ENCODE measurements at regions of chr2 and their contacts with region 1.

Region 1: GRCh38 chr2:55282110-55282917 is 13.3 kb upstream of the MTIF2 start:
- DNase-seq: peak; percentile 43 to 92
- H3K4me3 ChIP-seq: peak overlapping the region; percentile 81 to 87
- H3K27ac ChIP-seq: peak overlapping the region; percentile 92
- H3K4me1 ChIP-seq: peaks cover 0 to 9% of the 10 kb centered on the region in 2 donors
- H3K27me3 ChIP-seq: no peaks in the 10 kb centered on the region
- CTCF ChIP-seq: no peak

Region 2: DNA sequence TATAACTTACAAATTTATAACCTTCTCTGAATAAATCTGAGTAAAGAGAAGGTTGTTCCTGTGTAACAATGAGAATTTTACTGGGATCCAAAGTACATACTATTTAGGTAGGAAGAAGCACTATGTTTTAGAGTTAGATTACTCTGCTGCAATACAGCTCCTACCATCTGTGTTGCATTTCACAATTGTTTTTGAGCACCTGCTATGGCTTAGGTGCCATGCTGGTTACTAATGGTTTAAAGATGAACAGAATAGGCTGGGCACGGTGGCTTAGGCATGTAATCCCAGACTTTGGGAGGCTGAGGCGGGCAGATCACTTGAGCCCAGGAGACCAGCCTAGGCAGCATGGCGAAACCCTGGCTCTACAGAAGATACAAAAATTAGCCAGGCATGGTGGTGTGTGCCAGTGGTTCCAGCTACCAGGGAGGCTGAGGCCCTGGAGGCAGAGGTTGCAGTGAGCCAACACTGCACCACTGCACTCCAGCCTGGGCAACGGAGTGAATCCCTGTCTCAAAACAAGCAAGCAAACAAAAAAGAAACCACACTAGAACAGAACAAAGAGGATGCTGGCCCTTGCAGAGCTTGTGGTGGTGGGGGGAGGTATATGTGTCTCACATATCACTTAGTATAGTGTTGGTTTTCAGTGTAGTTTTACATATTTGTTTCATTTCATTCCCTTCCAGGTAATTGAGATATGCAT is 769.5 kb before region 1 on chr2:
- intact Hi-C with region 1: no loop called
- DNase-seq: no peak
- H3K4me3 ChIP-seq: no peak overlapping the region
- H3K27ac ChIP-seq: no peak overlapping the region
- H3K4me1 ChIP-seq: peaks cover 0 to 18% of the 10 kb centered on the region in 2 donors
- H3K27me3 ChIP-seq: no peaks in the 10 kb centered on the region
- CTCF ChIP-seq: no peak

Region 3: DNA sequence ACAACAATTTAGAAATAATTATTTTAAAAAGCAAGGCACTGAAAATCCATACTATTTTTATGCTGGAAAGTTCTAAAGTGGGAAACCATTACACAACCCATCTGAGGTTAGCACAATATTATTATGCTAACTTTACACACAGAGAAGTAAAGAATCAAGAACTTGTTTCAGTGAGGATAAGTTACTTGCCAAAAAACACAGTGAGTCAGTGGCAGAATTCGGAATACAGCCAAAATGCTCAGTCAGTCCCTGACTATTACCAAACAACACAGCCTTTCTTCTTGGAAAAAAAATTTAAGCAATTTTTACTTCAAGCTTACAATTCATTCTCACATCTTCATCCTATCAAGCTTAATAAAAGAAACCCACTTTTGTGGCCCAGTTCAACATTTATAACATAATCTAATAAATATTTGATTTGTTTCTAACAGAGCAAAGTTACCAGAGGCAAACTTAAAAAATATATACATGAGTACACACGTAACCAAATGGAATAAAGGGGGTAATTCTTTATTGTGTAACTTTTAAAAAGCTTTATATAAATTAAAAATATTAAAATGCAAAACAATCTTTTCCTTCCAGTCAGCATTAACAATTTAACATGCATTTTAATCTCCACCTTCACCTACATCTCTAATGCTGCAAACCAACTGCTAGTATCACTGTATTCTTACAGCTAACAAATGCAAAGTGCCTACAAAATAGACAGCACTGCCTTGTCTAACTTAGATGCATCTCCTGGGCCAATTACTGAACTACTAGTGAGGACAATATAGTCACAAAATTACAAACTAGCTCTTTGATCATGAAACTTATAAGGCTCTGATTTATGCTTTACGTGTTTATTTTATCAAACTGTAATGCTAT is 82.1 kb after region 1 on chr2:
- intact Hi-C with region 1: loop called (anchors 5 kb)
- DNase-seq: peak in 1 of 2 donors; percentile 85
- H3K4me3 ChIP-seq: no peak overlapping the region
- H3K27ac ChIP-seq: peak overlapping the region; percentile 10 to 54
- H3K4me1 ChIP-seq: peaks cover 0 to 17% of the 10 kb centered on the region in 2 donors
- H3K27me3 ChIP-seq: no peaks in the 10 kb centered on the region
- CTCF ChIP-seq: no peak

Region 4: DNA sequence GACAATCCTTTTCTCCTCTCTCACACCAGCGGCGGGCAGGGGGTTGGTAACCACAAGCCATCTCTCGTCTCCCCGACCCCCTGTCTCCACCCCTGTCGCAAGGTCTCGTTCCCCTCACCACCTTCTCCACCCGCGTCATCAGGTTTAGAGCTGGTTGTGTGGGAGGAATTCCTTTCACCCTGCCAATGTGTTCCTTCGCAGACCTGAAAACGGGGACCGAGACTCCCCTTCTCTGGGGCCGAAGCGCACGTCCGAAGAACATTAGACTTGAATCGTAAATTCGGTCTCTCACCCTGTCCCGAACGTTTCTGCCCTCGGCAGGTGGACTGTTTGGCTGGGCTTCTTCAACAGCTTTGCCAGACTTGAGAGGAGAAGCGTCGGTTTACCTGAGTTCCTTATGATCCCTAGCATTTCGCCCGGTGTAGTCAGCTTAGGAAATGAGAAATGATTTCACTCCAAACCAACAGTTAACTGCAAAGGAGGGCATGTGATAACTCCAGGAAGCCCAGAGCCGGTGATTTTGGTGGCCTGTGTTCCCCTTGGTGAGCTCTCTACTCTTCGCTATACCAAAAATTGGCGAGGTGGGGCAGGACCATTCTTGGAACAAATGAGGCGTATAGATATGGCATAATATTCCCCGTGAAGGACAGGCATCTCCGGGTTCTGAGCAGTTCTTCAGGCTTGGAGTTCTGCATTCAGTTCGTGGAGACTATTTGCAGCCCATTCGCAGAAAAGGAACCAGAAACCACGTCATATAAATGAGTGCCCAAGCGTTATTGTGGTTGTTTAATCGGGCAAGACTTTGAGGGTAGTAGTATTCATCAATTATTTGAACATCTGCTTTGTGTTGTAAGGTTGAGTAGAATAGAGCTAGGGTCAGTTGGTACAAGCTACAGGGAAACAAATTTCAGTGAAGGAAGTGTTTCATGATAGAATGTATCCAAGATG is 237.9 kb after region 1 on chr2:
- intact Hi-C with region 1: loop called (anchors 5 kb)
- DNase-seq: peak in 1 of 2 donors; percentile 68
- H3K4me3 ChIP-seq: peak overlapping the region; percentile 60 to 93
- H3K27ac ChIP-seq: peak overlapping the region; percentile 83 to 84
- H3K4me1 ChIP-seq: peaks cover 3% of the 10 kb centered on the region in 2 donors
- H3K27me3 ChIP-seq: no peaks in the 10 kb centered on the region
- CTCF ChIP-seq: no peak

Measured in ascending aorta (tissue), 2 donors.